Activated CD4-positive, alpha-beta T cell treated with anti-CD3 and anti-CD28 coated beads for 36 hours (primary cell): ENCODE measurements at regions of chr11 and their contacts with region 1.

Region 1: DNA sequence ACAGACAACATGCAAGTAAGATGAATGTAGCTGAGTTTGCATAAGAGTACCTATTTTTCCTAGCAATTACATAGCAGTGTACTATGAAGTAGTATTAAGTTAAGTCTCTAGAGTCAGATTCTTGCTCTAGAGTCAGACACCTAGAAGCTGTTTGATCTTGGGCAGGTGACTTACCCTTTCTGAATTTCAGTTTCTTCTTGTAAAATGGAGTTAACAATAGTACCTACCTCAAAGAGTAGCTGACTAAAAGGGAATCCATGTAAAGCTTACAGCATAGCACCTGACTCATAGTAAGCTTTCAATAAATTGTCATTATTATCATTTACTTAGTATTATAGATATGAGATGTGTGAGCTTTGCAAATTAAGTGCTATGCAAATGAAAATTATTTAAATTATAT is 47.8 kb upstream of the PTPRJ start:
- DNase-seq: no peak
- ATAC-seq: peak; percentile 84
- H3K4me3 Mint-ChIP-seq: no peak overlapping the region
- H3K27ac Mint-ChIP-seq: no peak overlapping the region
- H3K4me1 Mint-ChIP-seq: peaks cover 21% of the 10 kb centered on the region
- H3K27me3 Mint-ChIP-seq: no peaks in the 10 kb centered on the region

Region 2: DNA sequence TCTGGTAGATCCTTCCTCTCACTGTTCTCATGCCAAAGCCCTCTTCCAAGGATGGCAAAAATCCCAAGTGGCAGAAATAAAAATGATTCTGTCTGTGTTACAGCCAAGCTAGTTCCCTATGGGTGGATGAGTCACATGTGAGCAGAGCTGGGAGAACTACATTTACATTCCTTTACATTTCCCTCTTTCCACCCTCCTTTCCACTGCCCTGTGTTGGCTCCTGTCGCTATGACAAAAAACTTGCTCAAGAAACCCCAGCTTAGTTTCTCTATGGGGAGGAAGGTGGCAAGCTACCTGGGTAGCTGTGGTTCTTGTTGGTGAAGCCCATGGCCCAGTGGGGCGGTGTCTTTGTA is 727.9 kb before region 1 on chr11:
- CTCF ChIA-PET with region 1: no interaction called
- POLR2A ChIA-PET with region 1: no interaction called
- intact Hi-C with region 1: no loop called
- DNase-seq: no peak
- ATAC-seq: no peak
- H3K4me3 Mint-ChIP-seq: no peak overlapping the region
- H3K27ac Mint-ChIP-seq: no peak overlapping the region
- H3K4me1 Mint-ChIP-seq: no peaks in the 10 kb centered on the region
- H3K27me3 Mint-ChIP-seq: no peaks in the 10 kb centered on the region

Region 3: GRCh38 chr11:47725445-47726442 is 206.8 kb before region 1 on chr11:
- CTCF ChIA-PET with region 1: no interaction called
- POLR2A ChIA-PET with region 1: no interaction called
- intact Hi-C with region 1: no loop called
- DNase-seq: no peak
- ATAC-seq: no peak
- H3K4me3 Mint-ChIP-seq: no peak overlapping the region
- H3K27ac Mint-ChIP-seq: peak overlapping the region; percentile 27
- H3K4me1 Mint-ChIP-seq: no peaks in the 10 kb centered on the region
- H3K27me3 Mint-ChIP-seq: no peaks in the 10 kb centered on the region

Region 4: DNA sequence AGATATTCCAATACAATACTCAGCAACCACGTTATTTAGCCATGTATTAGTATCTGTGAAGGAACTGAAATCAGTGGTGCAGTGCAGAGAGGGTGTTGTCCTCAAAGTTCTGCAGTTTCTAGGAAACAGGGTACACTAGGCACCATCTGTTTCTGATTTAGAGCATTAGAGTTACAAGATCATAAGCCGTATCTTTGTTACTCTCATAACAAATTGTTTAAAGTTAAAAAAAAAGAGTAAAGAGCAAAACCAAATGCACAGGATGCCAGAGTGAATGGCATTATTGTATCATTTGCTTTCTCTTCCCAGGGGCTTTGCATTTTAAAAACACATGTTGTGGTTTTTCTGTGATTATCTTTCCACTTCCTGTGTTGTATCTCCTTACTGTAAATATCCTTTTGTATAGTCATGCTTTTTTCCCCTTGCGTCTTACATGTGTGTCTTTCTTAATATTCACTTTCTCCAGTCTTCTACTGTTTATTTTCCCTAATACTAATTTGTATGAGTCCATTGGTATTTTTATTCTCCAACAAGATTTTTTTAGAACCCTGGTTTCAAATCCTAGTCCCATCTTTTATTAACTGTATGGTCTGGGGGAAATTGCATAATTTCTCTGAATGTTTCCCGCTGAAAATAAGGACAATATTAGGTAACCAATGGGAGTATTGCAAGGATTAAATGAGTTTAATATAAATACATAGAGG is 69.2 kb before region 1 on chr11:
- CTCF ChIA-PET with region 1: interaction called, 6 read pairs
- POLR2A ChIA-PET with region 1: no interaction called
- intact Hi-C with region 1: loop called in 1 of 2 experiments (anchors 5 kb)
- DNase-seq: no peak
- ATAC-seq: peak; percentile 56
- H3K4me3 Mint-ChIP-seq: no peak overlapping the region
- H3K27ac Mint-ChIP-seq: no peak overlapping the region
- H3K4me1 Mint-ChIP-seq: peaks cover 39% of the 10 kb centered on the region
- H3K27me3 Mint-ChIP-seq: no peaks in the 10 kb centered on the region

Region 5: DNA sequence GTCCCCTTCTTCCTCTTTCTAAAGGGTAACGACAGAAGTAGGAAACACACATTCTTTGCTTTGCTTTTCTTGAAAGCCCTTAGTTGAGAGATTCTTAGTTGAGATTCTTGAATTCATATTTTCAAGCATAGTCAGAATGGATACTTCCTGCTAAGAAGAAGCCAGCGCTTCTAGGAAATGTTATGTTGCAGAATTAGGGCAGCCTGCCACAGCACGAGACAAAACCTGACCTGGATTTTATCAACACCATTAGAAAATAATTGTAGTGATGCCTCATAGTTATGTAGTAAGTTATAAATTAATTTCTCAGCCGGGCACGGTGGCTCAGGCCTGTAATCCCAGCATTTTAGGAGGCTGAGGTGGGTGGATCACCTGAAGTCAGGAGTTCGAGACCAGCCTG is 46.4 kb before region 1 on chr11:
- CTCF ChIA-PET with region 1: no interaction called
- POLR2A ChIA-PET with region 1: no interaction called
- intact Hi-C with region 1: no loop called
- DNase-seq: peak; percentile 26
- ATAC-seq: peak; percentile 42
- H3K4me3 Mint-ChIP-seq: no peak overlapping the region
- H3K27ac Mint-ChIP-seq: peak overlapping the region; percentile 78
- H3K4me1 Mint-ChIP-seq: peaks cover 45% of the 10 kb centered on the region
- H3K27me3 Mint-ChIP-seq: no peaks in the 10 kb centered on the region

Region 6: GRCh38 chr11:47980245-47981049 is 47.9 kb after region 1 on chr11 and contains the start of gene PTPRJ:
- CTCF ChIA-PET with region 1: interaction called, 12 read pairs
- POLR2A ChIA-PET with region 1: no interaction called
- intact Hi-C with region 1: loop called in 1 of 2 experiments (anchors 5 kb)
- DNase-seq: peak; percentile 73
- ATAC-seq: peak; percentile 59
- H3K4me3 Mint-ChIP-seq: peak within 1 kb of the TSS; percentile 93
- H3K27ac Mint-ChIP-seq: peak within 1 kb of the TSS; percentile 20
- H3K4me1 Mint-ChIP-seq: peaks cover 30% of the 10 kb centered on the region
- H3K27me3 Mint-ChIP-seq: peaks cover 5% of the 10 kb centered on the region
- total RNA-seq, gene PTPRJ: 20.8 to 21.3 TPM

Region 7: GRCh38 chr11:48034926-48035871 is 102.7 kb after region 1 on chr11:
- CTCF ChIA-PET with region 1: interaction called, 10 read pairs
- POLR2A ChIA-PET with region 1: interaction called, 5 read pairs
- intact Hi-C with region 1: no loop called
- DNase-seq: no peak
- ATAC-seq: peak; percentile 40
- H3K4me3 Mint-ChIP-seq: no peak overlapping the region
- H3K27ac Mint-ChIP-seq: peak overlapping the region; percentile 6
- H3K4me1 Mint-ChIP-seq: peaks cover 65% of the 10 kb centered on the region
- H3K27me3 Mint-ChIP-seq: no peaks in the 10 kb centered on the region

Region 8: DNA sequence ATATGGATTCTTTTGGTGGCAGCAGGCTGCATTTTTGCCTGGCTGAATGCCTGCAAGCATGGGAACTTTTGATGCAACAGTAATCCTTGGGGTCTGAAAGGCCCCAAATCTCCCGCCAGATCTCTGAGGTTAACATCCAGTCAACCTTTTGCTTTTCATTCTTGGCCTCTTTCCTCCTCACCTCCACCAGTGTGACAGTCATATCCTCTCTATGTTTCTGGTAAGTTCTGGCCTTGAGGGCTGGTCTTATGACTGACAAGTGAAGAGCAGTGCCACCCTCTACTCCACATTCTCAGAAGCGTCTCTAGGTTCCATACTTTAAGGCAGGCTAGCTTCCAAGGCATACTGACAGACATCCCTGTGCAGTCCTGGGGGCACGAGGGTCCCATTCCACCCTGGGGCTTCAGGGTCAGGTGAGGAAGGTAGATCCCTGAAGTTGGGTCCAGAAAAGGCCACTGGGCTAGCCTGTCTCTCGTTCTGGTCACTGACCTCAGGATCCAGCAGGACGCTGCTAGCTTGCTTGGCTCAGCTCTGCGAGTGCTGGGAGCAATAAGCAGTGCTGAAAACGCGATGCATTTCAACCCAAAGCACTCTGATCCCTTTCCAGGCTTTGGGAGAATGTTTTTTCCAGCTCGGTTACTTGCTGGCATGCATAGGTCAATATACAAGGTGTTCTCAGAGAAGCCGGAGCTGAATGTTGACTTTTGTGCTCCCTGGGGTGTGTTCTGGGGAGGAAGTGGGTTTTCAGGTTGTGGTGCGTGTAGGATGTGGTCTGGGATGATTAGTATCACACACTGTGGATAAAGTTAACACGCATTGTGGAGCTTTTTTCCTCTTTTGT is 123.0 kb after region 1 on chr11:
- CTCF ChIA-PET with region 1: interaction called, 17 read pairs
- POLR2A ChIA-PET with region 1: no interaction called
- intact Hi-C with region 1: loop called in 1 of 2 experiments (anchors 2 kb)
- DNase-seq: peak; percentile 80
- ATAC-seq: peak; percentile 93
- H3K4me3 Mint-ChIP-seq: peak overlapping the region; percentile 55
- H3K27ac Mint-ChIP-seq: peak overlapping the region; percentile 89
- H3K4me1 Mint-ChIP-seq: peaks cover 84% of the 10 kb centered on the region
- H3K27me3 Mint-ChIP-seq: no peaks in the 10 kb centered on the region

Region 9: GRCh38 chr11:48307760-48308386 is 375.3 kb after region 1 on chr11:
- CTCF ChIA-PET with region 1: no interaction called
- POLR2A ChIA-PET with region 1: no interaction called
- intact Hi-C with region 1: loop called in 1 of 2 experiments (anchors 10 kb)
- DNase-seq: peak; percentile 84
- ATAC-seq: peak; percentile 53
- H3K4me3 Mint-ChIP-seq: no peak overlapping the region
- H3K27ac Mint-ChIP-seq: no peak overlapping the region
- H3K4me1 Mint-ChIP-seq: peaks cover 4% of the 10 kb centered on the region
- H3K27me3 Mint-ChIP-seq: peaks cover 8% of the 10 kb centered on the region